Ovary (tissue), 10 donors: ENCODE measurements at regions of chr5 and their contacts with region 1.

Region 1: GRCh38 chr5:159576902-159577301 is 246.6 kb upstream of the IL12B start:
- DNase-seq: no peak
- H3K4me3 ChIP-seq: no peak overlapping the region
- H3K27ac ChIP-seq: no peak overlapping the region
- H3K4me1 ChIP-seq: no peaks in the 10 kb centered on the region
- H3K27me3 ChIP-seq: no peaks in the 10 kb centered on the region
- CTCF ChIP-seq: no peak
- EP300 ChIP-seq: no peak
- POLR2A ChIP-seq: no peak

Region 2: GRCh38 chr5:159616952-159617351 is 40.0 kb after region 1 on chr5:
- intact Hi-C with region 1: loop called in 1 of 4 experiments (anchors 2 kb)
- DNase-seq: no peak
- H3K4me3 ChIP-seq: no peak overlapping the region
- H3K27ac ChIP-seq: no peak overlapping the region
- H3K4me1 ChIP-seq: no peaks in the 10 kb centered on the region
- H3K27me3 ChIP-seq: no peaks in the 10 kb centered on the region
- CTCF ChIP-seq: no peak
- EP300 ChIP-seq: no peak
- POLR2A ChIP-seq: no peak